Vagina (tissue), 2 donors: ENCODE measurements at regions of chr12 and their contacts with region 1.

Region 1: GRCh38 chr12:50986966-50987737 is 34.8 kb downstream of the HIGD1C start:
- DNase-seq: no peak
- H3K4me3 ChIP-seq: no peak overlapping the region
- H3K27ac ChIP-seq: peak overlapping the region; percentile 59
- H3K4me1 ChIP-seq: peaks cover 28% of the 10 kb centered on the region
- H3K27me3 ChIP-seq: no peaks in the 10 kb centered on the region
- CTCF ChIP-seq: peak in 2 of 3 experiments; percentile 13 to 38
- POLR2A ChIP-seq: no peak

Region 2: GRCh38 chr12:50690925-50691324 is 296.2 kb before region 1 on chr12:
- intact Hi-C with region 1: no loop called
- DNase-seq: no peak
- H3K4me3 ChIP-seq: no peak overlapping the region
- H3K27ac ChIP-seq: no peak overlapping the region
- H3K4me1 ChIP-seq: no peaks in the 10 kb centered on the region
- H3K27me3 ChIP-seq: no peaks in the 10 kb centered on the region
- CTCF ChIP-seq: no peak
- POLR2A ChIP-seq: no peak

Region 3: GRCh38 chr12:50825372-50825838 is 161.7 kb before region 1 on chr12:
- intact Hi-C with region 1: loop called (anchors 10 kb)
- DNase-seq: no peak
- H3K4me3 ChIP-seq: no peak overlapping the region
- H3K27ac ChIP-seq: peak overlapping the region; percentile 78
- H3K4me1 ChIP-seq: peaks cover 15% of the 10 kb centered on the region
- H3K27me3 ChIP-seq: no peaks in the 10 kb centered on the region
- CTCF ChIP-seq: peak; percentile 39 to 61 (median 43)
- POLR2A ChIP-seq: no peak

Region 4: DNA sequence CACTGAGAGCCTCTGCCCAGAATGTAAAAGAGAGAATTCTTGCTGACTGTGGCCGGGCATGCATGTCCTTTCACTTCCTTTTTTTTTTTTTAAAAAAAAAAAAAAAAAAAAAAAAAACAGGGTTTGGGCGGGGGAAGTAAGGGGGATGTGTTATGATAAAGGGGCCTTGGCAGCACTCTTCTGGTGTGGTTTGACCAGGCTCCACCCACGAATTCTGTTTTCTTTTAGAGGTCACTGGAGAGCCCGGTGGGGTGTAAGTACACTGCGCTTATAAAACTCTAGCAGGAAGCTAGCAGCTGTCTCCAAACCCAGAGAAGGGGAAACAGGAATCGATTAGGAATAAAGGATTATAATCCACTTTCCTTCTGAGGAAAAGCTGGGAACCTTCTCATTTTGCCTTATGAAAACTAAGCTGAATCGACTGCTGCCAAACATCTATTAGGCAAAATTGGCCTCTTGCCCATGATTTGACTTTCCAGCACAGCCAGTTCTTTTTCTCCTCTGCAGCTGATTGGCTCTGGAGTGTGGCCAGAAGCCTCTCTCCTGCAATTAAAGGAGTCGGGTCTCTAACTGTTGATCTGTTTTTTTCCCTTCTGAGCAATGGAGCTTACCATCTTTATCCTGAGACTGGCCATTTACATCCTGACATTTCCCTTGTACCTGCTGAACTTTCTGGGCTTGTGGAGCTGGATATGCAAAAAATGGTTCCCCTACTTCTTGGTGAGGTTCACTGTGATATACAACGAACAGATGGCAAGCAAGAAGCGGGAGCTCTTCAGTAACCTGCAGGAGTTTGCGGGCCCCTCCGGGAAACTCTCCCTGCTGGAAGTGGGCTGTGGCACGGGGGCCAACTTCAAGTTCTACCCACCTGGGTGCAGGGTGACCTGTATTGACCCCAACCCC is 62.5 kb before region 1 on chr12:
- intact Hi-C with region 1: loop called (anchors 10 kb)
- DNase-seq: peak in 1 of 2 donors; percentile 94
- H3K4me3 ChIP-seq: peak overlapping the region; percentile 68 to 84
- H3K27ac ChIP-seq: peak overlapping the region; percentile 91
- H3K4me1 ChIP-seq: peaks cover 39% of the 10 kb centered on the region
- H3K27me3 ChIP-seq: no peaks in the 10 kb centered on the region
- CTCF ChIP-seq: no peak
- POLR2A ChIP-seq: peak in 1 of 2 donors; percentile 32